ENCODE measurements at regions of chr2 and their contacts with region 1.

Region 1: GRCh38 chr2:219402665-219403515 is 15.2 kb upstream of the DNPEP start:
- DNase-seq: peak; percentile 87
- H3K4me3 ChIP-seq: no peak overlapping the region; a peak in 1 of 4 replicates
- H3K27ac ChIP-seq: no peak overlapping the region
- H3K4me1 ChIP-seq: peaks cover 20 to 22% of the 10 kb centered on the region in 2 experiments; a peak in 3 of 4 replicates
- H3K27me3 ChIP-seq: no peaks in the 10 kb centered on the region
- CTCF ChIP-seq: peak; percentile 97
- EP300 ChIP-seq: no peak
- RAD21 ChIP-seq: peak; percentile 96

Region 2: GRCh38 chr2:219294356-219295351 is 108.2 kb before region 1 on chr2:
- CTCF ChIA-PET with region 1: interaction called, 10 read pairs
- POLR2A ChIA-PET with region 1: no interaction called
- DNase-seq: peak; percentile 100
- H3K4me3 ChIP-seq: peak overlapping the region; percentile 37 to 51; a peak in 3 of 4 replicates
- H3K27ac ChIP-seq: peak overlapping the region in 1 of 2 experiments; percentile 18; a peak in 1 of 4 replicates
- H3K4me1 ChIP-seq: peaks cover under 1 to 8% of the 10 kb centered on the region in 2 experiments; a peak in 1 of 4 replicates
- H3K27me3 ChIP-seq: no peaks in the 10 kb centered on the region
- CTCF ChIP-seq: peak; percentile 84
- EP300 ChIP-seq: no peak
- RAD21 ChIP-seq: peak; percentile 72

Region 3: GRCh38 chr2:219441451-219442255 is 38.8 kb after region 1 on chr2:
- CTCF ChIA-PET with region 1: interaction called, 48 read pairs
- POLR2A ChIA-PET with region 1: interaction called, 3 read pairs
- DNase-seq: peak; percentile 98
- H3K4me3 ChIP-seq: peak overlapping the region; percentile 67 to 76
- H3K27ac ChIP-seq: peak overlapping the region; percentile 52 to 84; a peak in 3 of 4 replicates
- H3K4me1 ChIP-seq: peaks cover 45 to 49% of the 10 kb centered on the region in 2 experiments
- H3K27me3 ChIP-seq: no peaks in the 10 kb centered on the region
- CTCF ChIP-seq: no peak; the same call in 1 of the 2 replicates
- EP300 ChIP-seq: no peak
- RAD21 ChIP-seq: no peak

Region 4: DNA sequence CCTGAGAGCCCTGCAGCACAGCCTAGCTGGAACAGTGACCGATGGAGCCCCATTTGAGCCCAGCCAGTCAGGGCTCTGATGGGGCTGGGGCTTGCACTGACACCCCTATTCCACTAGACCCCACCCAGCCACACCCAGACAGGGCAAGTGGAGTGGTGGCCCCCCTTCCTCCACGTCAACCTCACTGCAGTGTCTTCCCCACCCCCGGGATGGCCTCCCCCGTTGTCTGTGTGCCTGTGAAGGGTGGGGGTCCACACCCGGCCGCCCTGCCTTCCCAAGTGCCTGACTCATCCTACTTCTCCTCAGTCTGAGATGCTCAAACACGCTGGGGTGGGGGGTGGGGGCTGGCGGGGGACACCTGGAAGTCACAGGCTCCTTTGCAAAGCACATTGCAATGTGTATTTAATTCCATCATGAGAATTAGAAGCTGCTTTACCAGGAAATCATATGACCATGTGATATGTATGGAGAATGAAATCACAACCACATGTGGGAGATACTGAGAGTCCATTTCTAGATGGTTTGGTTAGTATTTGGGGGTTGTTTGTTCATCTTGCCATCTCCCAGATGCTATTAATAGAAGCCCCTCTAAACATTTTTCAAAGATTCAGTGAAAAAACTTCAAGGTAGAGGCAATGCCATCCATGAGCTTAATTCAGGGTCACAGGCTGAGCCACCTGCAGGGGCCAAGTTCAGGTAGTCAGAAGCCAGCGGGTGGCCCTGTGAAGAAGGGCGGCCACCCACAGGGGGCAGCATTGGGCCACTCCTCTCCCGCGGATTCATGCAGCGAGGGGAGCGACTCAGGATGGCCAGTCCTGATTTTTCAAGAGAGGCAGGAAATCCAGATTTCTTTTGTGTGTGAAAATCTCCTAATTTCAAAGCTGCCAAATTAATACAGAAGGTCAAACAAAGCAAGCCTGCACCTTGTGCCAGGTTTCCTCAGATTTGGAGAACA is 73.1 kb after region 1 on chr2:
- CTCF ChIA-PET with region 1: interaction called, 73 read pairs
- POLR2A ChIA-PET with region 1: interaction called, 3 read pairs
- DNase-seq: peak; percentile 94
- H3K4me3 ChIP-seq: no peak overlapping the region
- H3K27ac ChIP-seq: peak overlapping the region; percentile 36 to 74; a peak in 3 of 4 replicates
- H3K4me1 ChIP-seq: peaks cover 0 to 42% of the 10 kb centered on the region in 2 experiments; a peak in 1 of 4 replicates
- H3K27me3 ChIP-seq: no peaks in the 10 kb centered on the region
- CTCF ChIP-seq: peak; percentile 95
- EP300 ChIP-seq: no peak; a peak in 1 of 4 replicates
- RAD21 ChIP-seq: peak; percentile 91

Region 5: GRCh38 chr2:219509780-219510511 is 107.1 kb after region 1 on chr2:
- CTCF ChIA-PET with region 1: interaction called, 13 read pairs
- POLR2A ChIA-PET with region 1: interaction called, 4 read pairs
- DNase-seq: peak; percentile 83
- H3K4me3 ChIP-seq: peak overlapping the region; percentile 36 to 46; a peak in 3 of 4 replicates
- H3K27ac ChIP-seq: peak overlapping the region in 1 of 2 experiments; percentile 96; a peak in 2 of 4 replicates
- H3K4me1 ChIP-seq: peaks cover 3 to 99% of the 10 kb centered on the region in 2 experiments; a peak in 2 of 4 replicates
- H3K27me3 ChIP-seq: peaks cover 21% of the 10 kb centered on the region
- CTCF ChIP-seq: peak; percentile 76
- EP300 ChIP-seq: peak in 1 of 2 experiments; percentile 13; a peak in 1 of 4 replicates
- RAD21 ChIP-seq: peak; percentile 77

Region 6: DNA sequence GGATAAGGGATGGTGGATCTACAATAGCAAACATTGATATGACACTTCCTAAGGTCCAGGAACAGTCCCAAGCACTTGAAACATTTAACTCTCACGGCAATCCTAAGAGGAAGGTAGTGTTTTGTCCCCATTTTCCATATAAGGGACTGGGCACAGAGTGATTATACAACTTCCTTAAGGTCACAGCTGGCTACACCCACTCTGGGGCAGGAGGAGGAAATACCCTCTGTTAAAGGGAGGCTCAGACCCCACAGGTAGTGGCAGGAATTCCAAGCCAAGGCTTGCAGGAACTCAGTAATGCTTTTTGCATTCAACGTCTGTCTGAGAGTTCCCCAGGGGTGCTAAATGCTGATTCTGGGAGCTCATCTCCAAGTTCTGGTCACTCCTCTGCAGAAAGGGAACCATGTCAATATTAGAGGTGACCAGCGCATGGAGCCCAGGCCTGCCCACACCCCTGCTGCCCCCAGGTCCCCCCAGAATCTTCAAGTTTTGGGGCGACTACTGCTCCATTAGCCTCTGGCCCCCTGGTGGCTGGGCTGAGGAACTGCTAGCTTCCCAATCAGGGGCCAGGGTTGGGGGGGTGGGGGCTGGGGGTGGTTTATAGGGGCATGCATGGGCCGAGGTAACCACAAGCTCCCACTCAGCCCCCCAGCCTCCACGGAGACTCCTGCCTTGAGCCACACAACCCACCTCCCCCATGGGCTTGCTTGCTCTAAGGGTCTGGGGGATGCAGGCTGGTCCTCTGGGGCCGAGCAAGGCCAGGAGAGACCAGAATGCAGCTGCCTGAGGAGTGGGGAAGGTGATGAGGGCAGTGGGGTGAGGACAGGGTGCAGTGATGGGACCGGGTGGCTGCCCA is 157.4 kb after region 1 on chr2:
- CTCF ChIA-PET with region 1: interaction called, 10 read pairs
- POLR2A ChIA-PET with region 1: no interaction called
- DNase-seq: peak; percentile 90
- H3K4me3 ChIP-seq: no peak overlapping the region
- H3K27ac ChIP-seq: no peak overlapping the region
- H3K4me1 ChIP-seq: peaks cover 0 to 10% of the 10 kb centered on the region in 2 experiments; a peak in 1 of 4 replicates
- H3K27me3 ChIP-seq: no peaks in the 10 kb centered on the region
- CTCF ChIP-seq: peak; percentile 70
- EP300 ChIP-seq: no peak
- RAD21 ChIP-seq: no peak

Region 7: DNA sequence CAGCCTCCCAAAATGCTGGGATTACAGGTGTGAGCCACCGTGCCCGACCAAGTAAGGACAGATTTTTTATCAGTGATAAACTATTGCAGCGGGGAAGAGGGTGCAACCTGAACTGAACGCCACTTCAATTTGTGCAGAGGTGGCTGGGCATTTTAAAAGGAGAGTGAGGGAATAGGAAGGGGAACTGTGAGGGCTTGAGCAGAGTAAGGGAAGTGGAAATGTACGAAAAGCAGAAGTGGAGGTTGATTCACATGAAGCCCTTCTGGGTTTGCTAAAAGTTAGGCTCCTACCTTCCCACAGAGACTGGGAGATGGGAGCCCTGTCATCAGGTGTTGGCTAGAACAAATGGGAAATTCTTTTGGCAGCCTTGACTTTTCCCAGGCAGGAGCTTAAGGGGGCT is 200.9 kb after region 1 on chr2:
- CTCF ChIA-PET with region 1: no interaction called
- POLR2A ChIA-PET with region 1: no interaction called
- DNase-seq: no peak
- H3K4me3 ChIP-seq: no peak overlapping the region
- H3K27ac ChIP-seq: no peak overlapping the region
- H3K4me1 ChIP-seq: no peaks in the 10 kb centered on the region; a peak in 1 of 4 replicates
- H3K27me3 ChIP-seq: no peaks in the 10 kb centered on the region
- CTCF ChIP-seq: no peak
- EP300 ChIP-seq: no peak
- RAD21 ChIP-seq: no peak

Region 8: DNA sequence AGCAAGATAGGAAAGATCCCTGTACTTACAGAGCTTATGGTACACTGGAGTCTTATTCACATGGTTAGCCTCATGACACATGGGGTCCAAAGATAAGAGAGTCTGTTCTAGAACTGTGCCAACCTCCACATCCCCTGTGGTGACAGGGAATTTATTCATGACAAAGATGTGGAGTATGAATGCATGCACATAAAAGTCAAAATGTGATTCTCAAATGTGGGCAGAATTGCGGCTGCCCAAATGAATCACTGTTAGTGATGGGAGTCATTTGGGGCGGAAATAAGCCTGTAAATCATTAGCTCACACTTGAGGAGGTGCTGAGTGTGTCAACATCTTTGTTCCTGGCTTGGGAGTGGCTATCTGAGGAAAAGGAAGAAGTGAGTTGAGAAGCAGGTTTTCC is 785.1 kb after region 1 on chr2:
- CTCF ChIA-PET with region 1: no interaction called
- POLR2A ChIA-PET with region 1: no interaction called
- DNase-seq: no peak
- H3K4me3 ChIP-seq: no peak overlapping the region
- H3K27ac ChIP-seq: no peak overlapping the region
- H3K4me1 ChIP-seq: no peaks in the 10 kb centered on the region
- H3K27me3 ChIP-seq: no peaks in the 10 kb centered on the region
- CTCF ChIP-seq: no peak
- EP300 ChIP-seq: no peak
- RAD21 ChIP-seq: no peak